MCF 10A (cell line): ENCODE measurements at regions of chr13 and their contacts with region 1.

Region 1: GRCh38 chr13:99176309-99177276 is 24.1 kb upstream of the UBAC2 start:
- DNase-seq: peak; percentile 77
- H3K4me3 Mint-ChIP-seq: no peak overlapping the region
- H3K27ac Mint-ChIP-seq: no peak overlapping the region
- H3K4me1 Mint-ChIP-seq: peaks cover 6% of the 10 kb centered on the region
- H3K27me3 Mint-ChIP-seq: no peaks in the 10 kb centered on the region
- CTCF ChIP-seq: peak; percentile 91

Region 2: GRCh38 chr13:98033277-98034247 is 1143.0 kb before region 1 on chr13:
- CTCF ChIA-PET with region 1: no interaction called
- POLR2A ChIA-PET with region 1: no interaction called
- intact Hi-C with region 1: no loop called
- DNase-seq: peak; percentile 53
- H3K4me3 Mint-ChIP-seq: no peak overlapping the region
- H3K27ac Mint-ChIP-seq: no peak overlapping the region
- H3K4me1 Mint-ChIP-seq: no peaks in the 10 kb centered on the region
- H3K27me3 Mint-ChIP-seq: no peaks in the 10 kb centered on the region
- CTCF ChIP-seq: peak; percentile 15

Region 3: DNA sequence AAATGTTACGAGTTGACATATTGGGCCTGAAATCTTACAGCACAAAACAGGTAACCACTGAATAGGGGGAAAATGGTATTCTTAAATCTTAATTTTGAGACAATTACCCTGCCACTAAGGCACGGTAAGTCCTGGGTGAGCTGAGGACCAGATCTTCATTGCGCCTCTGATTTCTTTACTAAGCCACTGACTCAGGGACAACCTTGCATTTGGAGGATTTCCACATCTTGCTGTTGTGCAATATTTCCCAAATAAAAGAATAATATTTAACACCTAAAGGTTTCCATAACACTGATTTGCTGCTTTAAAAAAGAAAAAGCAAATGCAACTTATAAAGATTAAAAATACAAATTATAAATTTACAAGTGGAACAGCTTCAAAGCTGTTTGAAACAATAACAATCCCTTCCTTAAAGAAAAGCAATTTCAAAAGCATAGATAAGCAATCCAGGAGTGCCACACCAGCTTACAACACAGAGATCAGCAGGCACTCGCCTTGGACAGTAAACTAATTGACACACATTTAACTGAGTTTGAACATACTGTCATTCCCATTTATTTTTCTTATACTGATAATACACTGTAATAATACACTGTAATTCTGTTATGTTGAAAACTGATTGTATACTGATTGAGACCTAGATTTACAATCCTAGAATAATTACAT is 119.2 kb before region 1 on chr13:
- CTCF ChIA-PET with region 1: no interaction called
- POLR2A ChIA-PET with region 1: no interaction called
- intact Hi-C with region 1: no loop called
- DNase-seq: peak; percentile 89
- H3K4me3 Mint-ChIP-seq: no peak overlapping the region
- H3K27ac Mint-ChIP-seq: peak overlapping the region; percentile 59
- H3K4me1 Mint-ChIP-seq: peaks cover 47% of the 10 kb centered on the region
- H3K27me3 Mint-ChIP-seq: no peaks in the 10 kb centered on the region
- CTCF ChIP-seq: no peak

Region 4: DNA sequence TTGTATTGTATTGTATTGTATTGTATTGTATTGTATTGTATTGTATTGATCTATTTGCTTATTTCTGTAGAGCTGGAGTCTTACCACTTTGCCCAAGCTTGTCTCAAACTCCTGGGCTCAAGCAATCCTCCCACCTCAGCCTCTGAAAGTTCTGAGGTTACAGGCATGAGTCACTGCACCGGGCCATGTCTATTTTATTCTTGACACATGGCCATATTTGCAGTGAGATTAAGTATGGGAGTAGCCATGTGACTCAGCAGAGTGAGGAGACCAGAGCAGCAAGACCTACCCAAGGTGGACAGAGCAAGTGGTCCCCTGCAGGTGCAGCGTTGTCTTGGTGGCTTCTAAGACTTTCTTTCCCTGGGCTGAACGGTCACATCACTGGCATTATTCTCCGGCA is 25.1 kb before region 1 on chr13:
- CTCF ChIA-PET with region 1: interaction called, 14 read pairs
- POLR2A ChIA-PET with region 1: interaction called, 3 read pairs
- intact Hi-C with region 1: no loop called
- DNase-seq: peak; percentile 96
- H3K4me3 Mint-ChIP-seq: peak overlapping the region; percentile 11
- H3K27ac Mint-ChIP-seq: peak overlapping the region; percentile 91
- H3K4me1 Mint-ChIP-seq: peaks cover 31% of the 10 kb centered on the region
- H3K27me3 Mint-ChIP-seq: no peaks in the 10 kb centered on the region
- CTCF ChIP-seq: no peak

Region 5: GRCh38 chr13:99165753-99166587 is 10.6 kb before region 1 on chr13:
- CTCF ChIA-PET with region 1: interaction called, 16 read pairs
- POLR2A ChIA-PET with region 1: no interaction called
- intact Hi-C with region 1: no loop called
- DNase-seq: no peak
- H3K4me3 Mint-ChIP-seq: no peak overlapping the region
- H3K27ac Mint-ChIP-seq: no peak overlapping the region
- H3K4me1 Mint-ChIP-seq: no peaks in the 10 kb centered on the region
- H3K27me3 Mint-ChIP-seq: no peaks in the 10 kb centered on the region
- CTCF ChIP-seq: no peak

Region 6: DNA sequence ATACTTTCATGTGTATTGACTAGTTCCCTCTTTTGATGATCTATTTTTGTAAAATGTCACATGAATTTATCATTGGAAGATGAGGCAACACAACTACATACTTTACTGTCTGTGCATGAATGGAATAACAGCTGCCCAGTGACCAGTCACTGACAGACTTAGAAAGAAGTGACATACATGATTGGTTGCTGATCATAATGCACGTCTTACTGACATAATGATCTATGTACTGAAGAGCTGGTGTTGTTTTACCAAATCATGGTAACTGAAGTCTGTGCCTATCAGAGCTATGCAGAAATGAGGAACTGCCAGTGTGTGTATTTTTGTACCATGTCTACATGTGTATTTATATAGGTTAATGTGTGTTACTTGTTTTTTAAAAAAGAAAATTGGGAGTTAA is 55.1 kb after region 1 on chr13:
- CTCF ChIA-PET with region 1: interaction called, 10 read pairs
- POLR2A ChIA-PET with region 1: no interaction called
- intact Hi-C with region 1: no loop called
- DNase-seq: no peak
- H3K4me3 Mint-ChIP-seq: no peak overlapping the region
- H3K27ac Mint-ChIP-seq: no peak overlapping the region
- H3K4me1 Mint-ChIP-seq: peaks cover 16% of the 10 kb centered on the region
- H3K27me3 Mint-ChIP-seq: no peaks in the 10 kb centered on the region
- CTCF ChIP-seq: no peak

Region 7: DNA sequence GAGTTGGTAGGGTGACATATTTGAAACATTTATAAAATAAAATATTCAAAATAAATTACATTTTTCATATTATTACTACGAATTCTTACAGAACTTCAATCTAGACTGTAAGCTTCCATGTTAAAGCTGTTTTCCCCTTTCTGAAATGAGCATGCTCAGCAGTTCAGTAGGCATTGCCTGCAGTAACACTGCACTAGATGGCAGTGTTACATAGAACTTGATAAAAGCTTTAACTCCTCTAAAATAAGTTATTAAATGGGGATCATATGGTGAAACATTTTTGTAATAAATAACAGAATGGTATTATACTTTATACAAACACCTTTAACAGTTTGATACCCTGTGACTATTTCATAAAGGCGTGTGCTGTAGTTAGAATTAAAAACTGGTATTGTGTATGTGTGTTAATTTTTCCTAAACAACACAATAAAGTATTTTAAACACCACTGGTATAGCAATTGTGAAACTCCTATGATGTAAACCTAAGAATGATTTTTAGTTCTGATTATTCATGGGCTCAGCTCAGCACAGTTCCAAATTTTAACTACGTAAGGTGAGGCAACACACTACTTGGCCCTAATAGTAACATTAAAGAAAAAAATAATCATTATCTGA is 93.1 kb after region 1 on chr13:
- CTCF ChIA-PET with region 1: interaction called, 173 read pairs
- POLR2A ChIA-PET with region 1: interaction called, 6 read pairs
- intact Hi-C with region 1: loop called (anchors 1 kb)
- DNase-seq: peak; percentile 54
- H3K4me3 Mint-ChIP-seq: no peak overlapping the region
- H3K27ac Mint-ChIP-seq: no peak overlapping the region
- H3K4me1 Mint-ChIP-seq: no peaks in the 10 kb centered on the region
- H3K27me3 Mint-ChIP-seq: no peaks in the 10 kb centered on the region
- CTCF ChIP-seq: peak; percentile 43